Activated CD4-positive, alpha-beta T cell treated with anti-CD3 and anti-CD28 coated beads for 36 hours (primary cell): ENCODE measurements at regions of chr19 and their contacts with region 1.

Region 1: GRCh38 chr19:36489118-36489919 is at the start of gene ZNF566:
- DNase-seq: peak; percentile 97
- ATAC-seq: peak; percentile 93
- H3K4me3 Mint-ChIP-seq: peak within 1 kb of the TSS; percentile 86
- H3K27ac Mint-ChIP-seq: peak within 1 kb of the TSS; percentile 98
- H3K4me1 Mint-ChIP-seq: peaks cover 24% of the 10 kb centered on the region
- H3K27me3 Mint-ChIP-seq: no peaks in the 10 kb centered on the region
- total RNA-seq, gene ZNF566: 4.7 to 5.9 TPM

Region 2: DNA sequence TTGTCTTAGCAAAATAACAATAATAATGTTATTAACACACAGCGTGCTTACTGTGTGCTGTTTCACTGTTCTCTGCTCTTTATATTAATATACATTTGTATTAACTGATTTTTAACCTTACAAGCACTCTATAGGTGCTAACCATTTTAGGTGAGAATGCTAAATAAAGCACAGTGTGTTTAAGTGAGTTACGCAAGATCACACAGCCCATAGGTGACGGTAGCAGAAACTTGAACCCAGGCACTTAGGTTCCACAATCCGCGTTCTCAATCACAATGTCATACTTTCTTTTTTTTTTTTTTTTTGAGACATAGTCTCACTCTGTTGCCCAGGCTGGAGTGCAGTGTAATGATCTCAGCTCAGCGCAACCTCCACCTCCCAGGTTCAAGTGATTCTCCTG is 1556.8 kb before region 1 on chr19:
- CTCF ChIA-PET with region 1: no interaction called
- POLR2A ChIA-PET with region 1: no interaction called
- intact Hi-C with region 1: no loop called
- DNase-seq: no peak
- ATAC-seq: no peak
- H3K4me3 Mint-ChIP-seq: no peak overlapping the region
- H3K27ac Mint-ChIP-seq: no peak overlapping the region
- H3K4me1 Mint-ChIP-seq: peaks cover 8% of the 10 kb centered on the region
- H3K27me3 Mint-ChIP-seq: no peaks in the 10 kb centered on the region

Region 3: GRCh38 chr19:35710784-35711723 is 778.3 kb before region 1 on chr19:
- CTCF ChIA-PET with region 1: no interaction called
- POLR2A ChIA-PET with region 1: no interaction called
- intact Hi-C with region 1: loop called in 1 of 2 experiments (anchors 5 kb)
- DNase-seq: peak; percentile 88
- ATAC-seq: peak; percentile 48
- H3K4me3 Mint-ChIP-seq: peak overlapping the region; percentile 56
- H3K27ac Mint-ChIP-seq: peak overlapping the region; percentile 100
- H3K4me1 Mint-ChIP-seq: peaks cover 43% of the 10 kb centered on the region
- H3K27me3 Mint-ChIP-seq: no peaks in the 10 kb centered on the region

Region 4: DNA sequence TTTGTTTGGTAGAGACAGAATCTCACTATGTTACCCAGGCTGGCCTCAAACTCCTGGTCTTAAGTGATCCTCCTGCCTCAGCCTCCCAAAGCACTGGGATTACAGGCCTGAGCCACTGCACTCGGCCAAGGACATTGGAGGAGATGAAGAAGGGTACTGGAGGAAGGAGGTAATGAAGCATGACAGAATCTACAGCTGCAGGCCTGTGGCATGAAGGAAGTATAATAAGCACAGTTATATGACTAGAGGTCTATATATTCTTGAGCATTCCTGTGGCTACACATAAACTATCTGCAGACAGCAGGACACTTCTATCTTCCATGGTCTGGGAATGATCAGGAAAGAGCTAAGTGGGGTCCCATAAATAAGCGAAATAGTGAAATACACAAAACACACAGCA is 293.1 kb before region 1 on chr19:
- CTCF ChIA-PET with region 1: no interaction called
- POLR2A ChIA-PET with region 1: no interaction called
- intact Hi-C with region 1: loop called in 1 of 2 experiments (anchors 2 kb)
- DNase-seq: no peak
- ATAC-seq: no peak
- H3K4me3 Mint-ChIP-seq: no peak overlapping the region
- H3K27ac Mint-ChIP-seq: no peak overlapping the region
- H3K4me1 Mint-ChIP-seq: no peaks in the 10 kb centered on the region
- H3K27me3 Mint-ChIP-seq: no peaks in the 10 kb centered on the region

Region 5: GRCh38 chr19:36528194-36528920 is 39.0 kb after region 1 on chr19 and contains the start of gene ZNF260:
- CTCF ChIA-PET with region 1: no interaction called
- POLR2A ChIA-PET with region 1: interaction called, 17 read pairs
- intact Hi-C with region 1: loop called (anchors 1 kb)
- DNase-seq: peak; percentile 97
- ATAC-seq: peak; percentile 91
- H3K4me3 Mint-ChIP-seq: peak within 1 kb of the TSS; percentile 87
- H3K27ac Mint-ChIP-seq: peak within 1 kb of the TSS; percentile 96
- H3K4me1 Mint-ChIP-seq: peaks cover 14% of the 10 kb centered on the region
- H3K27me3 Mint-ChIP-seq: no peaks in the 10 kb centered on the region
- total RNA-seq, gene ZNF260: 5.7 to 8.2 TPM

Region 6: GRCh38 chr19:36665832-36666231 is 176.5 kb after region 1 on chr19:
- CTCF ChIA-PET with region 1: no interaction called
- POLR2A ChIA-PET with region 1: interaction called, 3 read pairs
- intact Hi-C with region 1: loop called in 1 of 2 experiments (anchors 1 kb)
- DNase-seq: no peak
- ATAC-seq: no peak
- H3K4me3 Mint-ChIP-seq: peak overlapping the region; percentile 98
- H3K27ac Mint-ChIP-seq: peak overlapping the region; percentile 99
- H3K4me1 Mint-ChIP-seq: peaks cover 26% of the 10 kb centered on the region
- H3K27me3 Mint-ChIP-seq: no peaks in the 10 kb centered on the region

Region 7: GRCh38 chr19:36850559-36851442 is 361.5 kb after region 1 on chr19 and contains the start of gene ZNF345:
- CTCF ChIA-PET with region 1: no interaction called
- POLR2A ChIA-PET with region 1: interaction called, 4 read pairs
- intact Hi-C with region 1: loop called in 1 of 2 experiments (anchors 1 kb)
- DNase-seq: peak; percentile 91
- ATAC-seq: peak; percentile 82
- H3K4me3 Mint-ChIP-seq: no peak within 1 kb of the TSS
- H3K27ac Mint-ChIP-seq: no peak within 1 kb of the TSS
- H3K4me1 Mint-ChIP-seq: peaks cover 10% of the 10 kb centered on the region
- H3K27me3 Mint-ChIP-seq: no peaks in the 10 kb centered on the region
- total RNA-seq, gene ZNF345: 3.5 to 4.6 TPM